ENCODE measurements at regions of chr7 and their contacts with region 1.

Region 1: DNA sequence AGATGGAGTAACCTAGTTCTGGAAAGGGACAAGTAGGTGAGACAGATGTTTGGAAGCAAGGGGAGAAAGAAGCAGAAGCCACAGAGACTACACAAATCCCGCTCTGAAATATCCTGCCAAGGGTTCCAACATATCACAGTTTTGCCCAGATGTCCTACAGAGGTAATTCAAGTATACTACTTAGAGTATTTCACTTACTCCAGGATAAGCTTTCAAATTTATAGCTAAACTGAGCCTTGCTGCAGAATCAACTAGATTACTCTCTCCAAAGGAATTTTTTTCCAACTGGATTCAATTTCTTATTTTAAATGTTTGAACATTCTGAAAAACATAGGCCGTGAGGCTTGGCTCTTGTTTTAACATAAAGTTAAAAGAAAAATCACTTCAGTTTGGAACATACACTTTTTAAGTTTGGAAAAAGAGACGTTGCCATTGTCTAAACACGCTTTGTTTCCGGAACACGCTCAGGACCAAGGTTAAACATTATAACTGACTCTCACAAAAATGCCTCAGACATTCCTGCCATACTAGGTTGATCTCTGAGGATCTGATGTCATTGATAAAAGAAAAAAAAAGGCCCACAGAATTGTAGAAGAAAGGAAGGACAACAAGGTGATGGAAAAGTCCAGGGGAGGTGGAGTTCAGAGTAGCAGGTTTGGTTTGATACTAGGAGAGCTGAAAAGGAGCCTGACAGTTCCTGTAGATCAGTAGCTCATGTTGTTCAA is 74.8 kb downstream of the FAM185A start:
- DNase-seq: no peak
- H3K4me3 ChIP-seq: no peak overlapping the region
- CTCF ChIP-seq: no peak

Region 2: GRCh38 chr7:102866535-102867215 is 43.1 kb after region 1 on chr7:
- in situ Hi-C with region 1: loop called (anchors 5 kb)
- DNase-seq: no peak
- H3K4me3 ChIP-seq: no peak overlapping the region
- CTCF ChIP-seq: no peak

Region 3: GRCh38 chr7:102912742-102913141 is 89.2 kb after region 1 on chr7 and contains the start of gene LRRC17:
- in situ Hi-C with region 1: no loop called
- DNase-seq: peak; percentile 86
- H3K4me3 ChIP-seq: peak within 1 kb of the TSS; percentile 38
- CTCF ChIP-seq: no peak

Region 4: GRCh38 chr7:103660455-103661371 is 837.2 kb after region 1 on chr7:
- in situ Hi-C with region 1: no loop called
- DNase-seq: peak; percentile 3
- H3K4me3 ChIP-seq: no peak overlapping the region
- CTCF ChIP-seq: no peak

Measured in astrocyte of the cerebellum (primary cell).